Kidney (tissue), 22 donors: ENCODE measurements at regions of chr19 and their contacts with region 1.

Region 1: GRCh38 chr19:2750808-2751443 is 11.1 kb upstream of the SLC39A3 start:
- DNase-seq: no peak
- H3K4me3 ChIP-seq: no peak overlapping the region
- H3K27ac ChIP-seq: no peak overlapping the region
- H3K4me1 ChIP-seq: no peaks in the 10 kb centered on the region
- H3K27me3 ChIP-seq: no peaks in the 10 kb centered on the region
- CTCF ChIP-seq: no peak

Region 2: DNA sequence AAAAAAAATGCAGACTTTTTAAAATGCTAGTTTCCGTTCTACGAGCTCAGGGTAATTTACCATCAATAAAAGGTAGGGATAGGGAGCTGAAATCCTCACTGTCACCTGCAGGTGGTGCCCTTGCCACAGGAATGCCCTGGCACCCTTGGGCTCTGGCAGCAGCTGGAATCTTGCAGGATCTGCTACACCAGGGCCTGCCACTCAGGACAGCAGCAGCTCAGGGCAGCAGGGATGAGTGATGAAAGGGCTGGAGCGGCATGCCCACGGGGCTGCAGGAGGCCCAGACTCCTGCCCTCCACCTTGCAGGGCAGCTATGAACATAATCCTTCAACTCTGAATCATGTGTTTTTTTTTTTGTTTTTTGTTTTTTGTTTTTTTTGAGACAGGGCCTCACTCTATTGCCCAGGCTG is 102.4 kb before region 1 on chr19:
- intact Hi-C with region 1: loop called (anchors 5 kb)
- DNase-seq: peak; percentile 71 to 85 (median 84)
- H3K4me3 ChIP-seq: no peak overlapping the region
- H3K27ac ChIP-seq: no peak overlapping the region
- H3K4me1 ChIP-seq: no peaks in the 10 kb centered on the region
- H3K27me3 ChIP-seq: no peaks in the 10 kb centered on the region
- CTCF ChIP-seq: peak; percentile 95